Activated CD8-positive, alpha-beta T cell treated with anti-CD3 and anti-CD28 coated beads for 36 hours (primary cell): ENCODE measurements at regions of chr14 and their contacts with region 1.

Region 1: DNA sequence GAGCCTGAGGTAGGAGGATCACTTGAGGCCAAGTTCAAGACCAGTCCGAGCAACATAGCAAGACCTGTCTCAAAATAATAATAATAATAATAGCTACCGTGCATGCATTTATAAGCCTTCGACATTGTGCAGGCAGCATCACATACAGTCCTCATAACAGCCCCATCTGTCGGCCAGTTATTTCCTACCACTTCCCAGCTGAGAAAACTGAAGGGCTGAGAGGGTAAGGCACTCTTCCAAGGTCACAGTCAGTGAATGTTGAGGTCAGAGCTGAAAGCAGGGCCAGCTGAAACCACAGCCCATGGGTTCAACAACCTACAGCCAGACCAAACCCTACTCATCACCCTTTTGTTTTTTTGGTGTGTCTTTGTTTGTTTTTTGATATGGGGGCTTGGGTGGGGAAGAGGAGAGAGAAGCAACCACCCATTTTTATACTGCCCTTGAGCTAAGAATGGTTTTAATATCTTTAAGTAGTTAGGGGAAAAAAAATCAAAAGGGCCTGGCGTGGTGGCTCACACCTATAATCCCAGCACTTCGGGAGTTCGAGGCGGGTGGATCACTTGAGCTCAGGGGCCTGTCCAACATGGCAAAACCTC is 16.8 kb upstream of the ITPK1 start:
- DNase-seq: peak; percentile 57
- ATAC-seq: peak; percentile 56
- H3K4me3 Mint-ChIP-seq: no peak overlapping the region
- H3K27ac Mint-ChIP-seq: no peak overlapping the region
- H3K4me1 Mint-ChIP-seq: no peaks in the 10 kb centered on the region
- H3K27me3 Mint-ChIP-seq: no peaks in the 10 kb centered on the region
- CTCF ChIP-seq: peak; percentile 47

Region 2: DNA sequence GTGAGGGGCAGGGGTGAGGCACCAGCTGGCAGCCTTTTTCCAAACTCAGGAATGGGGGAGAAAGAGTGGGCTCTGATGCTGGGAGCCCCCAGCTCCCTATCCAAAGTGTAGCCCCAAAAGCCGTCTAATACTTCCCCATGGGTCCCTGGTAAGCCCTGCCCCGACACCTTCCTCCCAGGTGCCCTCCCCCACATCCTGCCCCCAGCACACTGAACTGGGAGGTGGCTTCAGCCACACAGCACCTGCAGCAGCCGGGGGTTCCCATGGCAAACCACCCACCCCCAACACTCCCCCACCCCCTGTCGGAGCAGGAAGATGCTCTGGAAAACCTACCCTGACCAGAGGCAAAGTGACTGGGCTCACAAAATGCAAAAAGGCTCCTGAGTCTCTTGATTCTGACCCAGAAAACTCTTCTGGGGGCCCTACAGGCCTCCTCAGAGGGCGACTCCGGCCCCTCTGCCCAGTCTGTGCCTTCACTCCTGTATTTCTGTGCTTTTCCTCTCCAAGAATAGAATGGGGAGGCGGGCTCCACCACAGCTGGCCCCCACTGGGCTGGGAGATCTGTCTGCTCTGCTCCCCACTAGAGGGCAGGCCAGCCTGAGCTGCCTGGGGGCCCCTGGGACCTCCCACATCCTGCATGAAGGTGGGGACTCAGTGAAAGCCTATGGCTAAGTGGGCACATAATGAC is 98.4 kb before region 1 on chr14:
- CTCF ChIA-PET with region 1: interaction called, 10 read pairs
- POLR2A ChIA-PET with region 1: no interaction called
- intact Hi-C with region 1: no loop called
- DNase-seq: peak; percentile 75
- ATAC-seq: peak; percentile 94
- H3K4me3 Mint-ChIP-seq: peak overlapping the region; percentile 18
- H3K27ac Mint-ChIP-seq: peak overlapping the region; percentile 87
- H3K4me1 Mint-ChIP-seq: peaks cover 55% of the 10 kb centered on the region
- H3K27me3 Mint-ChIP-seq: no peaks in the 10 kb centered on the region
- CTCF ChIP-seq: peak; percentile 76

Region 3: DNA sequence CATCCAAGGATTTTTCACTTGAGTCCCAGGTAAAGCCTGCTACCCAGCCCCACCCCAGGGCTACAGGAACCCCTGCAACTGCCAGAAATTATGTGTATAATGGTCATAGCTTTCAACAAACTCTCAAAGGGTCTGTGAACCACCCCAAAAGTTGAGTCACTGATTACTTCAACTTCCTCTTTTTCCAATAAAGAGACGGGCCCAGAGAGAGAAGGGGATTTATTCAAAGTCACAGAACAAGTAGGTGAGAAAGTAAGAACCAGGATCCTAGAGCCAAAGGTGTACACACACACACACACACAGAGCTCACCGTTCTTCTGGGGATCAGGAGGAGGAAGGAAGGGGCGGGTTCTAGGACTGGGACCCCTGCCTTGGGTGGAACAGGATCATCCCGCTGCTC is 12.1 kb before region 1 on chr14:
- CTCF ChIA-PET with region 1: interaction called, 180 read pairs
- POLR2A ChIA-PET with region 1: interaction called, 4 read pairs
- intact Hi-C with region 1: no loop called
- DNase-seq: no peak
- ATAC-seq: no peak
- H3K4me3 Mint-ChIP-seq: no peak overlapping the region
- H3K27ac Mint-ChIP-seq: no peak overlapping the region
- H3K4me1 Mint-ChIP-seq: peaks cover 6% of the 10 kb centered on the region
- H3K27me3 Mint-ChIP-seq: no peaks in the 10 kb centered on the region
- CTCF ChIP-seq: no peak